Calu3 (cell line): ENCODE measurements at regions of chr15 and their contacts with region 1.

Region 1: DNA sequence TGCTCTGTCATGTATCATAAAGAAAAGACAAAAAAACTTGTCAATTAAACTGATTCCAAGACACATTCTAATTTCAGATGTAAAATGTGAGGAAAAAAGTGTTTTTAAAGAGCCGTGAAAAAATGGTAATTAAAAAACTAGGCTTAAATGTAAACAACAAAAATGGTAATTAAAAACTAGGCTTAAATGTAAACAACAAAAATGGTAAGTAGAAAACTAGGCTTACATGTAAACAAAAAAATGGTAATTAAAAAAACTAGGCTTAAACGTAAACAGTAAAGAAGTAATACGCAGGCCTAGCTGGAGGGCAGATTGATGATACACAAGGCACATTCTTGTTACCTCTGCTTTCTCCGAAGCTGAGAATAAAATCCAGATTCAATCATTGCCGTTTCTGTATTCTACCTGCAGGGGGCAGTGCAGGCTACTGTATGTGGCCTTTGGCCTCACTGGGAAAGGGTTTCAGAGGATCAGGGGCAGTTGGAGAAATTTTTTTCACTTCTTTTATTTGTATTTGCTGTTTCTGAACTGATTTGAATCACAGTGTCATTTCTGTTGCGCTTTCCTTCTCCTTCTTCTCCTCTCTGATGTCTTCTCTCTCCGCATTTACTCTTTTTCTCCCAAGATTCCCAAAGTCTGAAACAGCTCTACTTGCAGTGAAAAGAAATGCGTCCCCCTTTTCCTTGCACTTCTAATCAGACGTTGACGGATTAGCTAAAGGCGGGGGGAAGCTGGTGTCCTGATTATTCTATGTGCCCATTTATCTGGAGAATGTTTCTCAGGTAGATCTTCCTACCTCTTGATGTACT is 67.2 kb upstream of the MCTP2 start:
- DNase-seq: peak; percentile 79
- H3K4me3 Mint-ChIP-seq: no peak overlapping the region
- H3K27ac Mint-ChIP-seq: no peak overlapping the region
- H3K4me1 Mint-ChIP-seq: no peaks in the 10 kb centered on the region
- H3K27me3 Mint-ChIP-seq: no peaks in the 10 kb centered on the region
- CTCF ChIP-seq: peak; percentile 86

Region 2: GRCh38 chr15:94230956-94231722 is 66.9 kb after region 1 on chr15 and contains the start of gene MCTP2:
- CTCF ChIA-PET with region 1: interaction called, 5 read pairs
- intact Hi-C with region 1: loop called (anchors 2 kb)
- DNase-seq: peak; percentile 95
- H3K4me3 Mint-ChIP-seq: peak within 1 kb of the TSS; percentile 77
- H3K27ac Mint-ChIP-seq: peak within 1 kb of the TSS; percentile 93
- H3K4me1 Mint-ChIP-seq: peaks cover 31% of the 10 kb centered on the region
- H3K27me3 Mint-ChIP-seq: no peaks in the 10 kb centered on the region
- CTCF ChIP-seq: no peak
- total RNA-seq, gene MCTP2: 30.1 and 40.5 TPM in 2 replicates

Region 3: GRCh38 chr15:94324117-94324826 is 160.1 kb after region 1 on chr15:
- CTCF ChIA-PET with region 1: interaction called, 49 read pairs
- intact Hi-C with region 1: loop called (anchors 1 kb)
- DNase-seq: peak; percentile 66
- H3K4me3 Mint-ChIP-seq: no peak overlapping the region
- H3K27ac Mint-ChIP-seq: no peak overlapping the region
- H3K4me1 Mint-ChIP-seq: peaks cover 18% of the 10 kb centered on the region
- H3K27me3 Mint-ChIP-seq: no peaks in the 10 kb centered on the region
- CTCF ChIP-seq: peak; percentile 76

Region 4: GRCh38 chr15:94670438-94671034 is 506.3 kb after region 1 on chr15:
- CTCF ChIA-PET with region 1: no interaction called
- intact Hi-C with region 1: loop called (anchors 10 kb)
- DNase-seq: no peak
- H3K4me3 Mint-ChIP-seq: no peak overlapping the region
- H3K27ac Mint-ChIP-seq: no peak overlapping the region
- H3K4me1 Mint-ChIP-seq: no peaks in the 10 kb centered on the region
- H3K27me3 Mint-ChIP-seq: peaks cover 17% of the 10 kb centered on the region
- CTCF ChIP-seq: peak; percentile 64

Region 5: DNA sequence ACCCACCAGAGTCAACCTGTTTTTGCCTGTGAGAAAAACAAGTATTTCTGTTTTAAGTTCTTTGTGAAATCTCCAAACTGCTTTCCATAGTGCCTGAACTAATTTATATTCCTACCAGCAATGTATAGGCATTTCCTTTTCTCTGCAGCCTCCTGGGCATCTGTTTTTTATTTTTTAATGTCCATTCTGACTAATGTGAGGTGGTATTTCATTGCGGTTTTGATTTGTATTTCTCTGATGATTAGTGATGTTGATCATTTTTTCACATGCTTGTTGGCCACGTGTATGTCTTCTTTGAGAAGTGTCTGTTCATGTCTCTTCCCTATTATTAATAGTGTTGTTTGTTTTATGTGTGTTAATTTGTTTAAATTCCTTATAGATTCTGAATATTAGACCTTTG is 887.7 kb after region 1 on chr15:
- CTCF ChIA-PET with region 1: no interaction called
- intact Hi-C with region 1: no loop called
- DNase-seq: no peak
- H3K4me3 Mint-ChIP-seq: no peak overlapping the region
- H3K27ac Mint-ChIP-seq: no peak overlapping the region
- H3K4me1 Mint-ChIP-seq: no peaks in the 10 kb centered on the region
- H3K27me3 Mint-ChIP-seq: no peaks in the 10 kb centered on the region
- CTCF ChIP-seq: no peak